Ovary (tissue), 10 donors: ENCODE measurements at regions of chr13 and their contacts with region 1.

Region 1: GRCh38 chr13:111216166-111216960 is 101.3 kb downstream of the ARHGEF7 start:
- DNase-seq: peak; percentile 36 to 65 (median 59)
- H3K4me3 ChIP-seq: no peak overlapping the region
- H3K27ac ChIP-seq: peak overlapping the region in 1 of 2 donors; percentile 55
- H3K4me1 ChIP-seq: peaks cover 9% of the 10 kb centered on the region
- H3K27me3 ChIP-seq: no peaks in the 10 kb centered on the region
- CTCF ChIP-seq: peak; percentile 6 to 36 (median 31)
- EP300 ChIP-seq: no peak
- POLR2A ChIP-seq: no peak

Region 2: DNA sequence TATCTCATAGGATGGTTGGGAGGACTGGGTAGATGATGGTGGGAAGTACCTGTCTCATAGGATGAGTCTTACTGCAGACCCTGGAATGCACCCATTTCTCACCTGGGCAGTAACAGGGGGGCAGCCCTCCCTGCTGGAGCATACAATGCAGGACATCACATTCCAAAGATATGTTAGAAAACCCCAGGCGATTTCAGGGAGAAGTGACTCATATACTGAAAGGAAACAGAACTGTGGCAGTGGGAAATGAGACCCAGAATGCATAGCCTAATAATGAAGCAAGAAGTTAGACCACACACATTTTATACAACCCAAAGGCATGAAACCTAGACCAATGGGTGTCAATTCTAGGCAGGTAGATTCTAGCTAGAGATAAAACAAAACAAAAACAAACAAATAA is 1832.7 kb before region 1 on chr13:
- intact Hi-C with region 1: no loop called
- DNase-seq: no peak
- H3K4me3 ChIP-seq: no peak overlapping the region
- H3K27ac ChIP-seq: no peak overlapping the region
- H3K4me1 ChIP-seq: no peaks in the 10 kb centered on the region
- H3K27me3 ChIP-seq: no peaks in the 10 kb centered on the region
- CTCF ChIP-seq: no peak
- EP300 ChIP-seq: no peak
- POLR2A ChIP-seq: no peak

Region 3: DNA sequence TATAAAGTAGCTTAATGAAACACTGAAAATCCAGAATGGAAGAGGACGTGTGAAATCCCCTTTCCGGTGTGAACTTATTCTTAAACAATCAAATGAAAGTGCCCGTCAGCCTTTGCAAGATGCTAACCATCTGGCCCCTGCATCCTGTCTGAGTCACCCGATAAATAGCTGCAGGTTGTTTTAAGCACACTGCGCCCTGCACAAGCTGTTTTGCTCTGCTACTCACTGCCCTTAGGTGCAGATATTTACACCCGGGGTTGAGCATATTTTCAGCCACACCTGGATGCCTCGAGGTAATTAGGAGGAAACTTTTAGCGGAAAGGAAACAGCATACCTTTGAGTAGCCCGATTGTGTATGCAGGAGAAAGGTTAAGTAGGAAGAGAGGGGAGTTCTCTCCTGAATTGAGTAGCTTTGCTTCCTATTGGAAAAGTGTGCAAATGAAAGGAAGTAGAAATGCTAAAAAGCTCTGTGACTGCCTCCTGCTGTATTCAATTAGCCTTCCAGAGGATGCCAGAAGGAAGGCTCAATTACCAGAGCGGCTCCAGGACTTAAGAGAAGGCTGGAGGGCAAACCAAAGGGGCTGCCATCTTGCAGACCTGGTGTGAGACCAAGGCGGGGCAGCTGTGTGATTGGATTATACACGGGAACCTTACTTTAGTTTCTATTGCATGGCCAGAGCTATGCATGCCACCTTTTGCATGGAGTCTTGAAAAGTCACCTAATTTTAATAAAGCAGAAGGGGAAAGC is 1472.5 kb before region 1 on chr13:
- intact Hi-C with region 1: no loop called
- DNase-seq: peak in 1 of 5 donors; percentile 46
- H3K4me3 ChIP-seq: no peak overlapping the region
- H3K27ac ChIP-seq: no peak overlapping the region
- H3K4me1 ChIP-seq: peaks cover 6% of the 10 kb centered on the region
- H3K27me3 ChIP-seq: no peaks in the 10 kb centered on the region
- CTCF ChIP-seq: no peak
- EP300 ChIP-seq: no peak
- POLR2A ChIP-seq: no peak

Region 4: GRCh38 chr13:111066544-111066943 is 149.8 kb before region 1 on chr13:
- intact Hi-C with region 1: loop called in 2 of 4 experiments (anchors 5 kb)
- DNase-seq: peak; percentile 80 to 84 (median 82)
- H3K4me3 ChIP-seq: no peak overlapping the region
- H3K27ac ChIP-seq: peak overlapping the region; percentile 63 to 89
- H3K4me1 ChIP-seq: peaks cover 4% of the 10 kb centered on the region
- H3K27me3 ChIP-seq: no peaks in the 10 kb centered on the region
- CTCF ChIP-seq: no peak
- EP300 ChIP-seq: no peak
- POLR2A ChIP-seq: no peak

Region 5: DNA sequence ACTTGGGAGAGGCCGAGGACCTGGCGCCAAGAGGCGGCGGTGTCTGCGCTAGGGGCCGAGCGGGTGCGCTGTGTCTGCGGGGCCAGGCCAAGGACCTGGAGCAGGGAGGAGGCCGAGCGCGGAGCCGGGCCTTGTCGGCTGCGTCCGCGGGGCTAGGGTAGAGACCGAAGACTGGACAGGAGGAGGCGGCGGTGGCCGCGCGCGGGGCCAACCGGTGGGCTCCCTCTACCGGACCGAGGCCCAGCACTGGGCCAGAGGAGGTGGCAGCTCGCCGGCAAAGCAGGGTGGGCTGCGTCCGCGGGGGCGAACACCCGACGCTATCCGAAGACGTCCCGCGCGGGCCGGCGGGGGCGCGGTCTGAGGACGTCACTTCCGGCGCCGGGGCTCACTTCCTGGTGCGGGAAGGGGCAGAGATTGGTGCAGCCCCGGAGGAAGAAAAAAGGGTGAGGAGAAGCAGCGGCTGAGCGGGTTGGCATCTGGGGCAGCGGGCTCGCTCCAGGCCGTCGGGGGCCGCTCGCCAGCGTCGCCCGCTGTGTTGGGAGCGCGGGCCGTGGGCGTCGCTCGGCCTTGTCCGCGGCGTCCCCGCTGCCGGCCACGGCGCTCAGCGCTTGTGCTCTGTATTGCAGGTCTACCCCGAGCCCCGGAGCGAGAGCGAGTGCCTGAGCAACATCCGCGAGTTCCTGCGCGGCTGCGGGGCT is 62.9 kb before region 1 on chr13:
- intact Hi-C with region 1: loop called in 2 of 4 experiments (anchors 5 to 10 kb)
- DNase-seq: peak; percentile 92 to 97 (median 94)
- H3K4me3 ChIP-seq: peak overlapping the region; percentile 96
- H3K27ac ChIP-seq: peak overlapping the region; percentile 87 to 97
- H3K4me1 ChIP-seq: peaks cover 7% of the 10 kb centered on the region
- H3K27me3 ChIP-seq: no peaks in the 10 kb centered on the region
- CTCF ChIP-seq: peak in 2 of 3 donors; percentile 10 to 41
- EP300 ChIP-seq: peak; percentile 28
- POLR2A ChIP-seq: peak; percentile 94

Region 6: DNA sequence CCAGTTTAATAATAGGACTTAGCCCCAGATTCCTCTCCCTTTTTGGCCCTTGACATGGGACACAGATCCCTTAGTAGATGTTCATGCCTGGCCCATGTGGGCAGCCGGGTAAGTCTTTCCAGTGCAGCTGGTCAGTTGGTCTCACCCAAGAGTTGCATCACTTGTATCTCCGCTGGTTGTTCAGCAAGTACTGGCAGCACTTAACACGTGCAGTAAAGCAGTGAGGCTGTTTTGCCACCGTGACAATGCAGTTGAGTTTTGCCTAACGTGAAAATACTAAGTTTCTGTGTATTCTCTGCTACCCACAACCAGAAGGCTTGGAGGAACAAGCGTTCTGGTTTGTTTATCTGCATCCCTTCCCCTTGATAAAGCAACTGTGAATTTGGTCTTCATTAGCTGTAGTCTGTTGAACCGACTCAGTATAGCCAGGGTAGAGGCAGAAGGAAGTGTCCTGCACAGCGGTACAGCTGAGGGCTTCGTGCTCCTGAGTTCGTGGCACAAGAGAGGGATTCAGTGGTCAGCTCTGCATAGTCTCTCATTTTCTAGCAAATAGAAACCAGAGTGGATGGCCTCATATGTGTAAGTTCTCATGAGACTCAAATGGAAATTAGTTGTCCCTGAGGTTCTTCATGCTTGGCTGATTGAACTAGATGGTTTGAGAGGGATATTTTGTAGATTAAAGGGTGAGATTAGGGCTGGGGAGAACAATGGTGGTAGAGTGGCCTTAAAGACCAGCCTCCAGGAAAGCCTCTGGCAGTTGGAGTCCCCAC is 50.9 kb before region 1 on chr13:
- intact Hi-C with region 1: no loop called
- DNase-seq: no peak
- H3K4me3 ChIP-seq: no peak overlapping the region
- H3K27ac ChIP-seq: no peak overlapping the region
- H3K4me1 ChIP-seq: peaks cover 9% of the 10 kb centered on the region
- H3K27me3 ChIP-seq: no peaks in the 10 kb centered on the region
- CTCF ChIP-seq: no peak
- EP300 ChIP-seq: no peak
- POLR2A ChIP-seq: no peak